ENCODE measurements at regions of chr2 and their contacts with region 1.

Region 1: DNA sequence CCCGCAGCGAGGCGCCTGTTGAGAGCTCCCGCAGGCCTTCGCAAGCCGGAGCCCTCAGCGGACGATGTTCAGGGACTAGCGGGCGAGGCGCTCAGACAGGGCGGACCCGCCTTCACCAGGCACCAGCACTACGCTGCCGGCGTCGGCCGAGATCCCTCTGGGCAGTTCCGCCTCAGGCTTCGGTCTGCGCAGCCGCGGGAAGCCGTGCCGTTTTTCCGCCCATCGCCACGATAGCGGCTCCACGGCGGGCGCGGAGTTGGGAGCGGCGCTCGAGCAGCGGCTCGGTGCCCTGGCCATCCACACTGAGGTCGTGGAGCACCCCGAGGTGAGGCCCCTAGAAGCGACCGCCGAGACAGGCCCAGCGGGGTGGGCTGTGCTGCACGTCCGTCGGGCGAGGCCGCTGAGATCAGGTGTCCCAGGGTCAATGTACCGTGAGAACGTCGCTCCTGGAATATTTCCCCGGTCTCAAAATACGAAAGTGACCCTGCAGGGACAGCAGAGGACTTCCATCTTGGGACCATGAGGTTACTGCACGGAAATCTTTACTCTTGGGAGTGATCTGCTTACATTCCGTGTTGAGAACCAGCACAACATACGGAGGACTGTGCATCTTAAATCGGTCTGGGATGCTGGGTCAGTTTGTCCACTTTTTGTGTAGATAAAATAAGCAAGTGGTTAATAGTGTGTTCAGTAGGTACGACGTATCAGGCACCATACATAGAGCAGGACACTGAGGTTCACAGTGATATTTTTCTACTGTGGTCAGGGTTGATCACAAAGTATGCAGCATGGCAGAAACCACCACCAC is 13.3 kb upstream of the MTIF2 start:
- DNase-seq: peak; percentile 80 to 93
- H3K4me3 ChIP-seq: peak overlapping the region; percentile 65 to 91
- H3K27ac ChIP-seq: peak overlapping the region; percentile 94 to 97
- H3K4me1 ChIP-seq: peaks cover 0 to 26% (median 11%) of the 10 kb centered on the region in 4 donors
- H3K27me3 ChIP-seq: no peaks in the 10 kb centered on the region
- CTCF ChIP-seq: no peak

Region 2: GRCh38 chr2:54330162-54330925 is 952.0 kb before region 1 on chr2:
- intact Hi-C with region 1: loop called (anchors 5 kb)
- DNase-seq: peak; percentile 95 to 98
- H3K4me3 ChIP-seq: peak overlapping the region; percentile 65 to 79
- H3K27ac ChIP-seq: peak overlapping the region; percentile 90 to 97
- H3K4me1 ChIP-seq: peaks cover 0 to 16% (median 10%) of the 10 kb centered on the region in 4 donors
- H3K27me3 ChIP-seq: no peaks in the 10 kb centered on the region
- CTCF ChIP-seq: peak in 1 of 2 experiments; percentile 12

Region 3: DNA sequence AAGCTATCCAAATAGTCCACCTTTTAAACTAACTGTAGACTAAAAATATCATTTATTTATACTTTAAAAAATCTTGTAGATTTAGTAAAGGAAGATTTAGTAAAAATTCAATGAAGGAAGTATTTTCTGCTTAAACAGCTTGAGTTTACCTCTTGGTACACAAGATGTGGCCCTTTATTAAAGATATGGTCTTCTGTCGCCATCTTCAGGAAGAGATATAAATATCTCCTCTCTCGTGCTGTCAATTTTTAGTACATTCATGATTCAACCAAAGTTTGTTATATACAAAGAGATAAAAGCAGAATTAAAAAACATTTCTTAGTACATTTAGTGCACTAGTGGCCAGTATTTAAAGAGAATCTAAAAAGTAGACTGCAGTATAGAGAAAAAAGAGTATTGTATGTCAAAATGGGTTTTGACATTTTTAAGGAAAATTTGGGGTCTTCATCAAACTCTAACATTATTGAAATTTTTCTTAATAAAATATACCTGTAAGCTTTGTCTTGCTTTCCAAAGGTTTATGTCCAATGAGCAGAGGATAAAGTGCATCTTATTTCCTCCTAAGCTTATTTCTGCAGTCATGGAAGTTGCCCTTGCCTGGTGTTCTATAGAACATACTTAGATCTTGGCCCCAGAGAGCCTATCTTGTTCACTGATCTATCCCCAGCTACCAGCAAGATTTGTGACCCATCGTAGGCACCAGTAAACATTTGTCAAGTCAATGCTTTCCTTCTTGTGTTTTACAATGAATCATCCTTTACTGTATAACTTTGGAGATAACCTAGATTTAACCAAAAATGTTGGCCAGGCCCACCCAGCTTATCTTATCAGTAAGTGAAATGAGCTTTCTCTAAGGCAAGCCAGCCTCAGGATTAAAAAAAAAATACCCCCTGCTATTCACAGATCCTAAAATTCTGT is 577.4 kb before region 1 on chr2:
- intact Hi-C with region 1: no loop called
- DNase-seq: no peak
- H3K4me3 ChIP-seq: no peak overlapping the region
- H3K27ac ChIP-seq: no peak overlapping the region
- H3K4me1 ChIP-seq: peaks cover 0 to 14% (median 10%) of the 10 kb centered on the region in 4 donors
- H3K27me3 ChIP-seq: no peaks in the 10 kb centered on the region
- CTCF ChIP-seq: peak; percentile 56 to 78

Region 4: GRCh38 chr2:55232084-55232862 is 50.0 kb before region 1 on chr2 and contains the starts of genes CLHC1 and RPS27A:
- intact Hi-C with region 1: no loop called
- DNase-seq: peak; percentile 86 to 93
- H3K4me3 ChIP-seq: peak within 1 kb of the TSS; percentile 64 to 84
- H3K27ac ChIP-seq: peak within 1 kb of the TSS; percentile 87 to 91
- H3K4me1 ChIP-seq: peaks cover 0 to 29% (median 20%) of the 10 kb centered on the region in 4 donors
- H3K27me3 ChIP-seq: no peaks in the 10 kb centered on the region
- CTCF ChIP-seq: peak in 1 of 2 experiments; percentile 17

Region 5: GRCh38 chr2:55327470-55328230 is 45.3 kb after region 1 on chr2:
- intact Hi-C with region 1: no loop called
- DNase-seq: no peak
- H3K4me3 ChIP-seq: no peak overlapping the region
- H3K27ac ChIP-seq: no peak overlapping the region
- H3K4me1 ChIP-seq: no peaks in the 10 kb centered on the region
- H3K27me3 ChIP-seq: no peaks in the 10 kb centered on the region
- CTCF ChIP-seq: no peak

Measured in tibial artery (tissue), 4 donors.